Caco-2 (cell line): ENCODE measurements at regions of chr22 and their contacts with region 1.

Region 1: DNA sequence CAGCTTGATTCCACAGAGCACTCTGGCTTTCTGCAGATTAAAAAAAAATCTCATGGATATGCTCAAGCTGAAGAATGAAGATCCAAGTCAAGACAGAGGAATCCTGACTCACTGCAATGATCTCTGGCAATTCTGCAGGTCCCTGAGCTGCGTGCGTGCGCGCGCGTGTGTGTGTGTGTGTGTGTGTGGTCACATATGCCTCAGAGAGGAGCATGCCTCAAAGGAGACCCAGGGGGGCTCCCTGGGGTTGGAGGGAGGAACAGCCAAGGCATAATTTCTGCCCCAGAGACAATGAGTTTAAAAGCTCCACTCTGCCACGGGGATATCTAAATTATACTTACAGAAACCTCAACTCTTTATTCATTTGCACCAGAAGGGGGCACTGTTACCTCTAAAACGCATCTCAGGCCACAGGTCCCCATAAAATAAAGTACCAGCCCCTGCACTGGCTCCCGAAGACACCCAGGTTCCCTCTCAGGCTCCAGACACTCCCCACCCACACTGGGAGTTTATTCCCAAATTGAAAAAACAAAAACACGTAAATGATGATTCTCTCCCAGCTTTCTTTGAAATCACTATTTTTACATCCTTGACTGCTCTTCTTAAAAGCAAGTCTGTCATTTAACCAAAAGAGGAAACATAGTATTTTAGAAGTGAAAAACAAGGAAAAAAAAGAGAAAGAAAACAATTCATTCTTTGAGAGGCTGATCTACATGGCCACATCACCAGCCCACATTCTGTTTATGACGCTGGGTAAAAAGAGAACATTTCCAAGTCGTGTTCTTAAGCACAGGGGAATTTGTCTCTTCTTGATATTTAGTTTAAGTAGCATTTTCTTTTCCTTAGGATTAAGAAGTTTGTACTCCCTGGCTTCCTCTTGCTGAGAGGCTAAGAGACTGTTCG is 401.0 kb downstream of the LARGE1 start:
- DNase-seq: peak; percentile 42 to 68
- H3K4me3 ChIP-seq: no peak overlapping the region
- H3K4me3 Mint-ChIP-seq: no peak overlapping the region
- H3K27ac Mint-ChIP-seq: no peak overlapping the region
- H3K4me1 ChIP-seq: peaks cover 8% of the 10 kb centered on the region; the same call in 1 of the 2 replicates
- H3K4me1 Mint-ChIP-seq: peaks cover 2% of the 10 kb centered on the region
- H3K27me3 ChIP-seq: no peaks in the 10 kb centered on the region
- H3K27me3 Mint-ChIP-seq: no peaks in the 10 kb centered on the region
- CTCF ChIP-seq: peak; percentile 64 to 76

Region 2: DNA sequence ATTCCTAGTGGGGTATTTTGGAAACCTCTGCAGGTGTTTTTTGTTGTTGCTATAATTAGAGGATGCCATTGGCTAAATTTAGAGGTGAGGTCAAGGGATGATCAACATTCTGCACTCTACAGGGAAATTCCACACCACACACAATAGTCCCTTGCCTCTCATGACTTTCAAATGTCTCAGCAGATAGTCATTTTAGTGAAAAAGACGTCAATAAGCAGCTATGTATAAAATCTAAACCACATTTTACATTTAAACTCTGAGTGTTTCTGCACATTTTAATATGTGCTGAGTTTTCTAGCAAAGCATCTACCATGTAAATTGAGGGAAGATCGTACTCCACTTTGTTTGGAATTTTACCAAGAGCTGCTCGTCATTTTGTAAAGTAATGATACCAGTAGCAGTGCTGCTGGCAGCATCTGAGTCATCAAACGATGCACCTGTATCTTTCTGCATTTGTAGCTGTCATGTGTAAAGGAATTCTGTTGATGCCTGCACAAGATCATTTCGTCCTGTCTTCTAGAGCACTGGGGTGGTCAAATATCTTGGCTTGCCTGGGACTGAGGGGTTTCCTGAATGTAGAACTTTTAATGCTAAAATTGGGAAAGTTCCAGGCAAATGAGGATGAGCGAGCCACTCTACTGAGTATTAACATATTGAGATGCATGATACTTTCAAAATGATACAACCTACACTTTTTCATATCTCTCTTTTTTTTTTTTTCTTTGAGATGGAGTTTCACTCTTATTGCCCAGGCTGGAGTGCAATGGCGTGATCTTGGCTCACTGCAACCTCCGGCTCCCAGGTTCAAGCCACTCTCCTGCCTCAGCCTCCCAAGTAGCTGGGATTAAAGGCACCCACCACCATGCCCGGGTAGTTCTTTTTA is 46.6 kb before region 1 on chr22:
- CTCF ChIA-PET with region 1: no interaction called
- POLR2A ChIA-PET with region 1: no interaction called
- intact Hi-C with region 1: no loop called
- DNase-seq: no peak
- H3K4me3 ChIP-seq: no peak overlapping the region
- H3K4me3 Mint-ChIP-seq: no peak overlapping the region
- H3K27ac Mint-ChIP-seq: no peak overlapping the region
- H3K4me1 ChIP-seq: peaks cover 20% of the 10 kb centered on the region
- H3K4me1 Mint-ChIP-seq: peaks cover 19% of the 10 kb centered on the region
- H3K27me3 ChIP-seq: no peaks in the 10 kb centered on the region
- H3K27me3 Mint-ChIP-seq: no peaks in the 10 kb centered on the region
- CTCF ChIP-seq: no peak

Region 3: GRCh38 chr22:33492210-33492651 is 27.1 kb before region 1 on chr22:
- CTCF ChIA-PET with region 1: no interaction called
- POLR2A ChIA-PET with region 1: no interaction called
- intact Hi-C with region 1: no loop called
- DNase-seq: peak in 1 of 2 experiments; percentile 41
- H3K4me3 ChIP-seq: no peak overlapping the region
- H3K4me3 Mint-ChIP-seq: no peak overlapping the region
- H3K27ac Mint-ChIP-seq: no peak overlapping the region
- H3K4me1 ChIP-seq: peaks cover 8% of the 10 kb centered on the region; the same call in 1 of the 2 replicates
- H3K4me1 Mint-ChIP-seq: peaks cover 11% of the 10 kb centered on the region
- H3K27me3 ChIP-seq: no peaks in the 10 kb centered on the region
- H3K27me3 Mint-ChIP-seq: no peaks in the 10 kb centered on the region
- CTCF ChIP-seq: no peak

Region 4: GRCh38 chr22:33579448-33580093 is 60.2 kb after region 1 on chr22:
- CTCF ChIA-PET with region 1: interaction called, 16 read pairs
- POLR2A ChIA-PET with region 1: no interaction called
- intact Hi-C with region 1: loop called (anchors 1 kb)
- DNase-seq: peak; percentile 77 to 85
- H3K4me3 ChIP-seq: no peak overlapping the region
- H3K4me3 Mint-ChIP-seq: no peak overlapping the region
- H3K27ac Mint-ChIP-seq: peak overlapping the region; percentile 70
- H3K4me1 ChIP-seq: peaks cover 20% of the 10 kb centered on the region
- H3K4me1 Mint-ChIP-seq: peaks cover 23% of the 10 kb centered on the region
- H3K27me3 ChIP-seq: no peaks in the 10 kb centered on the region
- H3K27me3 Mint-ChIP-seq: no peaks in the 10 kb centered on the region
- CTCF ChIP-seq: peak; percentile 92

Region 5: GRCh38 chr22:33923660-33924246 is 404.4 kb after region 1 on chr22:
- CTCF ChIA-PET with region 1: no interaction called
- POLR2A ChIA-PET with region 1: no interaction called
- intact Hi-C with region 1: loop called (anchors 2 kb)
- DNase-seq: peak; percentile 67 to 69
- H3K4me3 ChIP-seq: no peak overlapping the region
- H3K4me3 Mint-ChIP-seq: peak overlapping the region; percentile 24
- H3K27ac Mint-ChIP-seq: no peak overlapping the region
- H3K4me1 ChIP-seq: no peaks in the 10 kb centered on the region; the same call in 1 of the 2 replicates
- H3K4me1 Mint-ChIP-seq: peaks cover 6% of the 10 kb centered on the region
- H3K27me3 ChIP-seq: peaks cover 2% of the 10 kb centered on the region; the same call in 1 of the 2 replicates
- H3K27me3 Mint-ChIP-seq: peaks cover 22% of the 10 kb centered on the region
- CTCF ChIP-seq: peak; percentile 62 to 70